A673 (cell line): ENCODE measurements at regions of chr17 and their contacts with region 1.

Region 1: DNA sequence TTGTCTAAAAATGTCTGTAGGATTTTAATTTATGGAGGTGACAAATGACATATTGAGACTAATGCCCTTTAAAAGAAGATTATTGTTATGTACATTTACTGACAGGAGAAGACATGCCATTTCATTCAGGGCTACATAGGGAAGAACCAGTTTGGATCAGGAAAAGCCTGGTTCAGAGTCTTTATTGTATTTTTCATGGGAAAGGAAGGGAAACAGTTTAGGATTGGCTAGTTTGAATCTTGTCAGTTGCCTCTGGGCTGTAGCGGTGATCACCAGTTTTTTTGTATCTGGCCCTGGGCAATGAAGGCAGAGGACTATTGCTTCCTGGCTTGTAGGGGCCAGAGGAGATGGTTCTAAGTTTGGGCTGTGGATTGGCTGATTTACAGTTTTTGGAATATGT is 31.8 kb downstream of the NSRP1 start:
- DNase-seq: no peak
- H3K4me3 ChIP-seq: no peak overlapping the region
- H3K27ac ChIP-seq: no peak overlapping the region
- H3K4me1 ChIP-seq: peaks cover 10% of the 10 kb centered on the region
- H3K27me3 ChIP-seq: no peaks in the 10 kb centered on the region
- CTCF ChIP-seq: no peak

Region 2: DNA sequence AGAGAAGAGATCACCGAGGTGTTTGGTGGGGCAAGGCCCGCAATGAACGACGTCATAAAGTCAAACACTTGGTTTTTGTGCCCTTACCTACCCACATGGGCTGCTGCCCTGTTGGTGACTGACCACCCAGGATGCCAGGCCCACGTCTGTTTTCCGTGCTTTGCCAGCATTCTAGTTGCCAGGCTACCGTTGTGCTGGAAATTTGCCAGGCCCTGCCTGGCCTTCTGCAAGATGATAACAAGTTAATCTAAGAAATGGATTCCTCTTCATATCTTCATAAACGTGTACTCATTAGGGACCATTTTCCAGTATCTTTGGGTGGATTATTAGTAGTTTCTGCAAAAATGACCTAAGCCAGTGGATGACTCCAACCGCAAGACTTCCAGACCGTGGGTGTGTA is 51.7 kb after region 1 on chr17:
- CTCF ChIA-PET with region 1: no interaction called
- POLR2A ChIA-PET with region 1: no interaction called
- intact Hi-C with region 1: no loop called
- DNase-seq: no peak
- H3K4me3 ChIP-seq: no peak overlapping the region
- H3K27ac ChIP-seq: no peak overlapping the region
- H3K4me1 ChIP-seq: no peaks in the 10 kb centered on the region
- H3K27me3 ChIP-seq: no peaks in the 10 kb centered on the region
- CTCF ChIP-seq: no peak

Region 3: GRCh38 chr17:31480067-31480466 is 1331.7 kb after region 1 on chr17:
- CTCF ChIA-PET with region 1: no interaction called
- POLR2A ChIA-PET with region 1: interaction called, 14 read pairs
- intact Hi-C with region 1: no loop called
- DNase-seq: no peak
- H3K4me3 ChIP-seq: no peak overlapping the region
- H3K27ac ChIP-seq: no peak overlapping the region
- H3K4me1 ChIP-seq: no peaks in the 10 kb centered on the region
- H3K27me3 ChIP-seq: no peaks in the 10 kb centered on the region
- CTCF ChIP-seq: no peak